ENCODE measurements at regions of chr5 and their contacts with region 1.

Region 1: GRCh38 chr5:63794296-63794695 is 167.9 kb downstream of the HTR1A start:
- DNase-seq: no peak
- H3K4me3 ChIP-seq: no peak overlapping the region
- H3K27ac ChIP-seq: no peak overlapping the region
- H3K4me1 ChIP-seq: no peaks in the 10 kb centered on the region
- H3K27me3 ChIP-seq: no peaks in the 10 kb centered on the region
- CTCF ChIP-seq: no peak
- POLR2A ChIP-seq: no peak

Region 2: GRCh38 chr5:62742207-62742606 is 1052.1 kb before region 1 on chr5:
- intact Hi-C with region 1: loop called (anchors 5 kb)
- DNase-seq: no peak
- H3K4me3 ChIP-seq: no peak overlapping the region
- H3K27ac ChIP-seq: no peak overlapping the region
- H3K4me1 ChIP-seq: no peaks in the 10 kb centered on the region
- H3K27me3 ChIP-seq: no peaks in the 10 kb centered on the region
- CTCF ChIP-seq: no peak
- POLR2A ChIP-seq: no peak

Region 3: DNA sequence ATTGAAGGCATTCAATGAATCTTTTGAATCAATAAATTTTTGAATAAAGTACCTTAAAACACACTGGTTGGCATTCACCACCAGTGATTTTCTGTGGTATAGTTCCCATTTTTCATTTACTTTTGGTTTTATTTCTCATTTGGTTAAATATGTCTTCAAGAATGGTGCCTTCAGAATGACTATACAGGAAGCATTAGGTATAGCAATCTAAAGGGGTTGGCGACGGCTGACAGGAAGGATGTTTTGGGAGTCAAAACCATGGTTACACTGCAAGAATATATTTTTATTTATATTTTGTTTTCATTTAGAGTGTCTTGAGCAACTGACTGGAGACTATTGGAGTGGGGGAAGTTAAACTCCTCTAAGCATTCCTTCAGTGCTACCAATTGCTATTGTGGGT is 67.8 kb before region 1 on chr5:
- intact Hi-C with region 1: no loop called
- DNase-seq: no peak
- H3K4me3 ChIP-seq: no peak overlapping the region
- H3K27ac ChIP-seq: no peak overlapping the region
- H3K4me1 ChIP-seq: no peaks in the 10 kb centered on the region
- H3K27me3 ChIP-seq: no peaks in the 10 kb centered on the region
- CTCF ChIP-seq: no peak
- POLR2A ChIP-seq: no peak

Region 4: DNA sequence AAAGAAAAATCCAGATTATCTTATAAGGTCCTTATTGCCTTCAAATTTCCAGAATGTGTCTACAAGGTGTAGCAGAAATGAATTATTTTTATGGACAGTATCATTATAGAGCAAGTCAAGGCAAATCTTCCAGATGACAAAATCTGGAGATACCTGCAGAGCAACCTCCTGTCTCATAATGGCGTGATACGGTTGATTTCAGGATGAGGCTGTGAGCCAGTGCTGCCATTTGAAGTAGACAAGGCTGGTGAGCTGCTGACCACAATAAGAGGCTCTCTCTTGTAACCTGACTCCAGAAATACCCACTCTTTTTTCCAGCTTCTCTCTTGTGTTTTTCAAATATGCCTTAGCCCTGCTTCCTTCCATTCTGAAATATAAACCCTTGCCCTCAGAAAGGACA is 59.8 kb after region 1 on chr5:
- intact Hi-C with region 1: no loop called
- DNase-seq: no peak
- H3K4me3 ChIP-seq: no peak overlapping the region
- H3K27ac ChIP-seq: no peak overlapping the region
- H3K4me1 ChIP-seq: no peaks in the 10 kb centered on the region
- H3K27me3 ChIP-seq: no peaks in the 10 kb centered on the region
- CTCF ChIP-seq: no peak
- POLR2A ChIP-seq: no peak

Region 5: DNA sequence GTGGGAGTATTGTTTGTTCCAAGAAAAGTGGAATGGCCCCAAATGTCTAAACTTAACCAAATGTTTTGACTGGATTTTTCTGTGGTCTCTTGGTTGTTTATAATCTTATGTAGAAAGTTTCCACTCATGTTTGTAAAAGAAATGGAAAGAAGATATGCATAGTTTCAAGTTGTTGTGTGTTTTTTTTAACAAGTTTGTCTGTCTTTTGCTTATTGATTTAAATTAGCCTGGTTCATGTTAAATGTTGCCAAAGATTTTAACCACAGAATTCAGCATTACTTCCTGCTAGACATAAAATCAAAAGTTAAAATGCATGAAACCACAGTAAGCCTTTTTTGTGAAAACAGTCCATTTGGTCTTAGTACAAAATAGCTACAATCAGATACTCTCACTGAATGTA is 1782.8 kb after region 1 on chr5:
- intact Hi-C with region 1: no loop called
- DNase-seq: no peak
- H3K4me3 ChIP-seq: no peak overlapping the region
- H3K27ac ChIP-seq: no peak overlapping the region
- H3K4me1 ChIP-seq: no peaks in the 10 kb centered on the region
- H3K27me3 ChIP-seq: no peaks in the 10 kb centered on the region
- CTCF ChIP-seq: no peak
- POLR2A ChIP-seq: no peak

Measured in breast epithelium (tissue), 4 donors.